ENCODE measurements at regions of chr16 and their contacts with region 1.

Region 1: GRCh38 chr16:68085259-68086071 is at the start of gene NFATC3:
- DNase-seq: peak; percentile 95 to 100 (median 98)
- ATAC-seq: peak; percentile 69 to 79
- H3K4me3 Mint-ChIP-seq: peak within 1 kb of the TSS; percentile 86 to 98 (median 92)
- H3K27ac Mint-ChIP-seq: peak within 1 kb of the TSS; percentile 81 to 97 (median 96)
- H3K4me1 Mint-ChIP-seq: peaks cover 40 to 71% (median 66%) of the 10 kb centered on the region in 4 donors
- H3K27me3 Mint-ChIP-seq: no peaks in the 10 kb centered on the region
- polyA plus RNA-seq, gene NFATC3: 85.2 to 102 (median 86.6) TPM

Region 2: GRCh38 chr16:67806428-67807147 is 278.9 kb before region 1 on chr16 and contains the starts of genes RANBP10 and TSNAXIP1:
- POLR2A ChIA-PET with region 1: interaction called, 11 read pairs
- DNase-seq: peak; percentile 90 to 98 (median 97)
- ATAC-seq: peak; percentile 91 to 92
- H3K4me3 Mint-ChIP-seq: peak within 1 kb of the TSS; percentile 87 to 96 (median 92)
- H3K27ac Mint-ChIP-seq: peak within 1 kb of the TSS; percentile 77 to 98 (median 94)
- H3K4me1 Mint-ChIP-seq: peaks cover 16 to 50% (median 46%) of the 10 kb centered on the region in 4 donors
- H3K27me3 Mint-ChIP-seq: no peaks in the 10 kb centered on the region
- polyA plus RNA-seq, gene RANBP10: 5.8 to 13.8 (median 6.3) TPM
- polyA plus RNA-seq, gene TSNAXIP1: 0.14 TPM in 1 of 3 donors, not detected in the others

Region 3: DNA sequence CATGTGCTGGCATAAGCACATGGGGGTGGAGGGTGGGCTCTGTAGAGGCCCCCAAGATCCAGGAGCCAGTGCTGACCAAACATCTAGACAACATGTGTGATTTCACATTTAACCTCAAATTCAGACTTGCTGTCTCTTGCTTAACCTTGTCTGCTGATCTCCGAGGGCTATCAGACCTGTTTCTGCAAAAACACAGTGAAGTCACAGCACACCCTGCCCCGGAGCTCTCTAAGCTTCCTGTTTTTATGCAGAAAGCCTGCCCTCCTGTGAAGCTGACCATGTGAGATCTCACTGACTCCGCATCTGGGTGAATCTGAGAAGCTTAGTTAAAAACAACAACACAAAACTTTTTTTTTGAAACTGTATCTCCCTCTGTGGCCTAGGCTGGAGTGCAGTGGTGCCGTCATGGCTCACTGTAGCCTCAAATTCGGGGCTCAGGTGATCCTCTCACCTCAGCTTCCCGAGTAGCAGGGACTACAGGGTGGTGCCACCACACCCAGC is 79.6 kb before region 1 on chr16:
- POLR2A ChIA-PET with region 1: interaction called, 45 read pairs
- DNase-seq: peak in 9 of 10 donors; percentile 30 to 85 (median 62)
- ATAC-seq: peak; percentile 97 to 98
- H3K4me3 Mint-ChIP-seq: peak overlapping the region; percentile 29 to 75 (median 68)
- H3K27ac Mint-ChIP-seq: peak overlapping the region; percentile 81 to 99 (median 97)
- H3K4me1 Mint-ChIP-seq: peaks cover 13 to 57% (median 41%) of the 10 kb centered on the region in 4 donors
- H3K27me3 Mint-ChIP-seq: no peaks in the 10 kb centered on the region

Region 4: GRCh38 chr16:68040507-68041288 is 44.8 kb before region 1 on chr16:
- POLR2A ChIA-PET with region 1: interaction called, 13 read pairs
- DNase-seq: peak; percentile 78 to 95 (median 88)
- ATAC-seq: peak; percentile 99 to 100
- H3K4me3 Mint-ChIP-seq: peak overlapping the region in 2 of 10 donors; percentile 27 to 47
- H3K27ac Mint-ChIP-seq: peak overlapping the region in 9 of 10 donors; percentile 21 to 92 (median 66)
- H3K4me1 Mint-ChIP-seq: peaks cover 5 to 35% (median 11%) of the 10 kb centered on the region in 4 donors
- H3K27me3 Mint-ChIP-seq: no peaks in the 10 kb centered on the region

Region 5: GRCh38 chr16:68128577-68129305 is 43.3 kb after region 1 on chr16:
- POLR2A ChIA-PET with region 1: no interaction called
- DNase-seq: no peak
- ATAC-seq: no peak
- H3K4me3 Mint-ChIP-seq: peak overlapping the region in 2 of 10 donors; percentile 37 to 51
- H3K27ac Mint-ChIP-seq: peak overlapping the region; percentile 81 to 90 (median 86)
- H3K4me1 Mint-ChIP-seq: peaks cover 19 to 78% (median 64%) of the 10 kb centered on the region in 4 donors
- H3K27me3 Mint-ChIP-seq: no peaks in the 10 kb centered on the region

Region 6: DNA sequence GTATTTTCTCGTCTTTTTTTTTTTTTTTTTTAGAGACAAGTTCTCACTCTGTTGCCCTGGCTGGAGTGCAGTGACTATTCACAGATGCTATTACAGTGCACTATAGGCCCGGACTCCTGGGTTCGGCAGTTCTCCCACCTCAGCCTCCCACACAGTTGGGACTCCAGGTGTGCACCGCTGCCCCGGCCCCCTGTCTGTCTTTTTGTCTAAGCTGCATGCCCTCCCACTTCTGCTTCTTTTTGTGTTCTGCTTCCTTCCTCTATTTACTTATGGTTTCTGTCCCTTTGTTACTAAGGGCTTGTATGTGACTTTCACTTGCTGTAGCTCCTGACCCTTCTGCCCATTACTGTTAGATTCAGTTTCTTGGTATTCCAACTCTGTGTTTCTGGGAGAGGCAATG is 199.4 kb after region 1 on chr16:
- POLR2A ChIA-PET with region 1: interaction called, 16 read pairs
- DNase-seq: peak in 2 of 10 donors; percentile 31 to 61
- ATAC-seq: peak in 1 of 2 donors; percentile 6
- H3K4me3 Mint-ChIP-seq: peak overlapping the region; percentile 74 to 90 (median 84)
- H3K27ac Mint-ChIP-seq: peak overlapping the region; percentile 86 to 98 (median 91)
- H3K4me1 Mint-ChIP-seq: peaks cover 58 to 96% (median 90%) of the 10 kb centered on the region in 4 donors
- H3K27me3 Mint-ChIP-seq: no peaks in the 10 kb centered on the region